Right ventricle myocardium inferior (tissue), 1 donor: ENCODE measurements at regions of chr15 and their contacts with region 1.

Region 1: DNA sequence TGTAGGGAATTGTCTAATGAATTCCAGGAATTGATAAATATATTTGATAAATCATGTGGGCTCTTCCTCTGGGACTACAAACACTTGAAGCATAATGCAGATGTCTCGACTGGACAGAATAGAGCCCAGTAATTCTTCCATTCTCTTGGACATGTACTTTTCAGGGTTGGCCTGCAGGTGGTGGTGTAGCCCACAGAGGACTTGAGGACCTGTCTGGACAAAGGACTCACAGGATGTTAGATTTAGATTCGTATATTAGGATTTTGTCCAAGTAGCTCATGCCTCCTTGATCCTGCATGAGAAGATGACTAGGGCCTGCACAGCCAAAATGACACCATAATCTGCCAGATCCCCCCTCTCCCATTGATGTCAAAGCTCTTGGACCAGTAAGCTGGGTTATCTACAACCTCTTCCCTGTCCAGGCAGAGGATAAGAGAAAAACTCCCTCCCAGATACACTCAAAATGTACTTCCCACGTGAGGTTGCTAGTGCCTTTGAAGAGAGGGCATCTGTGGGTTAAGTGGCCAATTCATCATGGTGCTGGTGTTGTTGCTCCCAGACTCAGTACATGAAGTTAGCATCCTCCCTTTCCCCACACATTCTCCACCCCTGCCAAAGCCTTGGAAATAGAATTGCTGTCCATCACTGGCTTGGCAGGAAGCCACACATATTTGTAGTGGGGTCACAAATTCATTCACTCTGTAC is 88.6 kb upstream of the ZNF280D start:
- DNase-seq: no peak
- ATAC-seq: peak; percentile 74

Region 2: GRCh38 chr15:56464893-56465520 is 356.9 kb before region 1 on chr15 and contains the start of gene MNS1:
- intact Hi-C with region 1: no loop called
- DNase-seq: peak; percentile 92
- ATAC-seq: peak; percentile 100
- total RNA-seq, gene MNS1: 1.0 TPM

Region 3: GRCh38 chr15:56869573-56869972 is 47.7 kb after region 1 on chr15:
- intact Hi-C with region 1: loop called (anchors 2 kb)
- DNase-seq: peak; percentile 74
- ATAC-seq: no peak

Region 4: GRCh38 chr15:57060799-57061198 is 238.9 kb after region 1 on chr15:
- intact Hi-C with region 1: no loop called
- DNase-seq: no peak
- ATAC-seq: no peak

Region 5: GRCh38 chr15:57152666-57153539 is 331.0 kb after region 1 on chr15:
- intact Hi-C with region 1: no loop called
- DNase-seq: no peak
- ATAC-seq: no peak

Region 6: GRCh38 chr15:57172925-57173324 is 351.1 kb after region 1 on chr15:
- intact Hi-C with region 1: no loop called
- DNase-seq: no peak
- ATAC-seq: no peak

Region 7: GRCh38 chr15:57306161-57306943 is 484.5 kb after region 1 on chr15:
- intact Hi-C with region 1: loop called (anchors 2 kb)
- DNase-seq: peak; percentile 95
- ATAC-seq: peak; percentile 88